ENCODE measurements at regions of chr10 and their contacts with region 1.

Region 1: GRCh38 chr10:114937962-114938855 is at the start of gene TRUB1:
- DNase-seq: peak; percentile 94 to 95
- H3K4me3 ChIP-seq: peak within 1 kb of the TSS; percentile 61 to 84
- H3K27ac ChIP-seq: peak within 1 kb of the TSS; percentile 64 to 87
- H3K4me1 ChIP-seq: peaks cover 0 to 24% (median 14%) of the 10 kb centered on the region in 4 donors
- H3K27me3 ChIP-seq: no peaks in the 10 kb centered on the region
- CTCF ChIP-seq: no peak

Region 2: GRCh38 chr10:114821293-114821914 is 116.8 kb before region 1 on chr10 and contains the start of gene FHIP2A:
- intact Hi-C with region 1: loop called (anchors 10 kb)
- DNase-seq: peak; percentile 69 to 83
- H3K4me3 ChIP-seq: peak within 1 kb of the TSS; percentile 83 to 93
- H3K27ac ChIP-seq: peak within 1 kb of the TSS; percentile 97 to 98
- H3K4me1 ChIP-seq: peaks cover 0 to 34% (median 19%) of the 10 kb centered on the region in 4 donors
- H3K27me3 ChIP-seq: no peaks in the 10 kb centered on the region
- CTCF ChIP-seq: peak; percentile 45 to 92

Region 3: GRCh38 chr10:116364868-116365267 is 1426.7 kb after region 1 on chr10:
- intact Hi-C with region 1: no loop called
- DNase-seq: no peak
- H3K4me3 ChIP-seq: no peak overlapping the region
- H3K27ac ChIP-seq: no peak overlapping the region
- H3K4me1 ChIP-seq: no peaks in the 10 kb centered on the region
- H3K27me3 ChIP-seq: no peaks in the 10 kb centered on the region
- CTCF ChIP-seq: no peak